Mammary epithelial cell (primary cell): ENCODE measurements at regions of chr15 and their contacts with region 1.

Region 1: GRCh38 chr15:101307048-101307896 is 12.2 kb upstream of the SNRPA1 start:
- DNase-seq: no peak
- H3K4me3 ChIP-seq: no peak overlapping the region
- H3K27ac ChIP-seq: no peak overlapping the region
- H3K4me1 ChIP-seq: peaks cover 7% of the 10 kb centered on the region
- H3K27me3 ChIP-seq: no peaks in the 10 kb centered on the region
- CTCF ChIP-seq: no peak

Region 2: DNA sequence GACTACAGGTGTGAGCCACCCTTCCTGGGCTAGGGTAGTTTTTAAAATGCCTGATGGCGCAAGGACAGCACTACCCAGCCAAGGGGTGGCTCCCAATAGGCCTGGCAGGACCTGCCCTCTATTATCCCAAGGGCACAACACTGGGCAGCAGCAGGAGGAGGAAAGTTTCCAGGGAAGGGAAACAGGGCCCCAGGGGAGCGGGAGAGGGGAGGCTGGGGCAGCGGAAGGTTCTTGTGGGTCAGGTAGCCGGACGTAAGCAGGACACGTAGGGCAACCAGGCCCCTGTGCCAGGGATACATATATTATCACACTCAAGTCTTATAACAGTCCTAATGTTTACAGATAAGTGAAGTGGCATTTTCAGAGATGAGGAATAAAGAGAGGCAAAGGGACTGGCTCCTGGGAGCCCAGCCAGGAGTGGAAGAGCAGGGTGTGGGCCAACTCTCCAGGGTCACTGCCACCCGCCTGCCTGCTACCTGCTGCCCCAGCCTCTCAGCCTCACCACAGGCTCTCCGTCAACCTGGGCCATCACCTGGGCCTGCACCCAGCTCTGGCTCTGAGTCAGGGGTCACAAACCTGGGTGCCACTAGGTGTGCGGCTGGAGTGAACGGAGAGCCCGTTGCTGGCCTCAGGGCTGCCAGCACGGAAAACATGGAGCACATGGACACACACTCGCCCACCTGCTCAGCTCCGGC is 61.0 kb after region 1 on chr15:
- CTCF ChIA-PET with region 1: no interaction called
- dilution Hi-C with region 1: no loop called
- in situ Hi-C with region 1: loop called in 1 of 2 experiments (anchors 10 kb)
- intact Hi-C with region 1: no loop called
- DNase-seq: no peak
- H3K4me3 ChIP-seq: no peak overlapping the region
- H3K27ac ChIP-seq: no peak overlapping the region
- H3K4me1 ChIP-seq: no peaks in the 10 kb centered on the region
- H3K27me3 ChIP-seq: no peaks in the 10 kb centered on the region
- CTCF ChIP-seq: no peak

Region 3: GRCh38 chr15:101397521-101398003 is 90.3 kb after region 1 on chr15:
- CTCF ChIA-PET with region 1: no interaction called
- dilution Hi-C with region 1: loop called (anchors 5 kb)
- in situ Hi-C with region 1: no loop called
- intact Hi-C with region 1: no loop called
- DNase-seq: no peak
- H3K4me3 ChIP-seq: no peak overlapping the region
- H3K27ac ChIP-seq: no peak overlapping the region
- H3K4me1 ChIP-seq: no peaks in the 10 kb centered on the region
- H3K27me3 ChIP-seq: peaks cover 2% of the 10 kb centered on the region
- CTCF ChIP-seq: no peak